ENCODE measurements at regions of chr14 and their contacts with region 1.

Region 1: DNA sequence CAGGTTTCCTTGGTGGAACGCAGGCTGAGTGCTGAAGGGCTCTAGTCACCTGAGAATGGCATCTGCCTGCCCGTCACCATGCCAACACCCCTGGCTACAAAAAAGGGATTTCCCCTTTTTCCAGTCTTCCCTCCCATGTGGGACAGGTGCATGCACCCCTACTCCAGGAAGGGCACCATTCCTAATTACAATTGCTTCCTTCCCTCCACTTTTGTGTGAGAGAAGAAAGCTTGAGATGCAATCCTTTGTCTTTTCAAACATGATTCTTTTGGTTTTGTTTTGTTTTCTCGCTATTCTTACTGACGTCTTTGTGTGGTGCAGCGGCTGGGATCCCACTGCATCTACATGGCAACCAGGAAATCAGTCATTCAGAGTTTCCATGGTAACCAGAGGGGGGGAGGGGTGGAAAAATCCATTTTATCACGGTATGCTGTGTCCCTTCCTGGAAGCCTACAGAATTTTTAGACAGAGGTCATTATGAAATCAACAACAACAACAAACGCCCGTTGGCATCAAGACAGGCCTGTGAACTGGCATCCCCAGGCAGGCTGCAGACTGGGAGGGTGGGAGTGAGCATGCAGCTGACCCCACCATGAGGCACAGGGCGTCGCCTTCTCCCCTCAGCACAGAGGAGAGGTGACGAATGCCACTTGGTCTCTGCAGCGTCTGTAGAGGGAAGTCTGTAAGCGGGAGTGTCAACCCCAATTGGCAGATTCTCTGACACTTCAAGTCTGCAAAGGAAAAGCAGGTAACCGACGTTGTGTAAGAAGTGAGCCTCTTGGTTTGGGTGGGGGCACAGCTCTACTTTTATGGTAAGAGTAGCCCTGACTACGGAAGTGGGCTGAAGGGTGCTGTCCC is 13.6 kb upstream of the GNG2 start:
- DNase-seq: peak; percentile 97
- ATAC-seq: peak; percentile 82
- H3K4me3 Mint-ChIP-seq: peak overlapping the region; percentile 85
- H3K27ac Mint-ChIP-seq: peak overlapping the region; percentile 98
- H3K4me1 Mint-ChIP-seq: peaks cover 74% of the 10 kb centered on the region
- H3K27me3 Mint-ChIP-seq: no peaks in the 10 kb centered on the region

Region 2: GRCh38 chr14:51792819-51793218 is 54.0 kb before region 1 on chr14:
- CTCF ChIA-PET with region 1: no interaction called
- DNase-seq: no peak
- ATAC-seq: no peak
- H3K4me3 Mint-ChIP-seq: no peak overlapping the region
- H3K27ac Mint-ChIP-seq: no peak overlapping the region
- H3K4me1 Mint-ChIP-seq: no peaks in the 10 kb centered on the region
- H3K27me3 Mint-ChIP-seq: peaks cover 29% of the 10 kb centered on the region

Region 3: DNA sequence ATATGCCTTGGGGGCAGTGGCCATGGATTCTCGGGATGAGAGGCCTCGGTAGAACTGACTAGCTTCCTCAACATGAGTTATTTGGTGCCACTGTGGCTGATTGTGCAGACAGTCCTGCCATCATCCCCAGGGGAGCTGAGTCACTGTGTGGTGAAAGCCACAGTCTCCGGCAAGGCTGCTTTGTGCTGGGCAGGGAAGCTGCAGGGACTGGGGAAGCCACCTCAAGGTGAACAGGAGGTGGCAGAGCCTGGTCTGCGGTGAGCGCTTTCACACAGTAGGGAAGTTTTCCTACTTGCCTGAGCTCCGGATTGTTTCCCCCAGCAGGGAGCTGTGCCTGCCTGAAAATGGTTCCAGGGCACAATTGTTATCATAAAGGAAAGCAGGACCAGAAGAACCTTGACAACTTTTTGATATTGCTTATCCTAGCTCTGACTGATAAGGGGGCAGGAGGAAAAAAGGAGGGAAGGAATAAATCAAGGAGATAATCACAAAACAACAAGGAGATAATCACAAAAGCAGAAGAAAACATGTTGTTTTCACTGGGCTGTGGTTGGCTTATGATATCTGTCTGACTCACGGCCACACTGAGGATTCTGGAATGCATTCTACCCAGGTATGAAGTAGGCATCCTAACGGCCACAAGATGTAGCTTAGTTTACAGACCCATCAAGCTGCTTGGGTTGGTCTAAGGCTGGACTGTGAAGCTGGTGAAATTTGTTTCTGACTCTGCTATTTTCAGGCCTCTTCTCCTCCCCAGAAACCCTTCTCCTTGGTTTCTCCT is 18.7 kb before region 1 on chr14:
- CTCF ChIA-PET with region 1: interaction called, 11 read pairs
- DNase-seq: peak; percentile 87
- ATAC-seq: peak; percentile 99
- H3K4me3 Mint-ChIP-seq: no peak overlapping the region
- H3K27ac Mint-ChIP-seq: peak overlapping the region; percentile 10
- H3K4me1 Mint-ChIP-seq: no peaks in the 10 kb centered on the region
- H3K27me3 Mint-ChIP-seq: no peaks in the 10 kb centered on the region

Region 4: GRCh38 chr14:51860164-51860824 is 13.4 kb after region 1 on chr14 and contains the start of gene GNG2:
- CTCF ChIA-PET with region 1: interaction called, 34 read pairs
- DNase-seq: peak; percentile 93
- ATAC-seq: peak; percentile 95
- H3K4me3 Mint-ChIP-seq: peak within 1 kb of the TSS; percentile 87
- H3K27ac Mint-ChIP-seq: peak within 1 kb of the TSS; percentile 94
- H3K4me1 Mint-ChIP-seq: peaks cover 46% of the 10 kb centered on the region
- H3K27me3 Mint-ChIP-seq: no peaks in the 10 kb centered on the region
- total RNA-seq, gene GNG2: 243 to 257 TPM

Region 5: GRCh38 chr14:51865953-51866747 is 19.3 kb after region 1 on chr14:
- CTCF ChIA-PET with region 1: interaction called, 34 read pairs
- DNase-seq: peak; percentile 46
- ATAC-seq: peak; percentile 28
- H3K4me3 Mint-ChIP-seq: no peak overlapping the region
- H3K27ac Mint-ChIP-seq: no peak overlapping the region
- H3K4me1 Mint-ChIP-seq: peaks cover 25% of the 10 kb centered on the region
- H3K27me3 Mint-ChIP-seq: no peaks in the 10 kb centered on the region